ENCODE measurements at regions of chr19 and their contacts with region 1.

Region 1: GRCh38 chr19:506404-507285 is 652 bp upstream of the TPGS1 start:
- H3K4me3 Mint-ChIP-seq: peak overlapping the region; percentile 89
- H3K27ac Mint-ChIP-seq: peak overlapping the region; percentile 97
- H3K4me1 Mint-ChIP-seq: peaks cover 46% of the 10 kb centered on the region
- H3K27me3 Mint-ChIP-seq: no peaks in the 10 kb centered on the region

Region 2: GRCh38 chr19:488505-489417 is 17.9 kb before region 1 on chr19:
- intact Hi-C with region 1: loop called (anchors 2 kb)
- H3K4me3 Mint-ChIP-seq: peak overlapping the region; percentile 87
- H3K27ac Mint-ChIP-seq: peak overlapping the region; percentile 87
- H3K4me1 Mint-ChIP-seq: peaks cover 14% of the 10 kb centered on the region
- H3K27me3 Mint-ChIP-seq: peaks cover 32% of the 10 kb centered on the region

Region 3: GRCh38 chr19:558770-559439 is 52.3 kb after region 1 on chr19:
- intact Hi-C with region 1: no loop called
- H3K4me3 Mint-ChIP-seq: no peak overlapping the region
- H3K27ac Mint-ChIP-seq: peak overlapping the region; percentile 7
- H3K4me1 Mint-ChIP-seq: peaks cover 35% of the 10 kb centered on the region
- H3K27me3 Mint-ChIP-seq: peaks cover 1% of the 10 kb centered on the region

Measured in dendritic cell treated with granulocyte-macrophage colony-stimulating factor and Interleukin-4, amounts not matched to agents 40 ng/mL and 50 ng/mL, for 4 days (primary cell).